ENCODE measurements at regions of chr11 and their contacts with region 1.

Region 1: DNA sequence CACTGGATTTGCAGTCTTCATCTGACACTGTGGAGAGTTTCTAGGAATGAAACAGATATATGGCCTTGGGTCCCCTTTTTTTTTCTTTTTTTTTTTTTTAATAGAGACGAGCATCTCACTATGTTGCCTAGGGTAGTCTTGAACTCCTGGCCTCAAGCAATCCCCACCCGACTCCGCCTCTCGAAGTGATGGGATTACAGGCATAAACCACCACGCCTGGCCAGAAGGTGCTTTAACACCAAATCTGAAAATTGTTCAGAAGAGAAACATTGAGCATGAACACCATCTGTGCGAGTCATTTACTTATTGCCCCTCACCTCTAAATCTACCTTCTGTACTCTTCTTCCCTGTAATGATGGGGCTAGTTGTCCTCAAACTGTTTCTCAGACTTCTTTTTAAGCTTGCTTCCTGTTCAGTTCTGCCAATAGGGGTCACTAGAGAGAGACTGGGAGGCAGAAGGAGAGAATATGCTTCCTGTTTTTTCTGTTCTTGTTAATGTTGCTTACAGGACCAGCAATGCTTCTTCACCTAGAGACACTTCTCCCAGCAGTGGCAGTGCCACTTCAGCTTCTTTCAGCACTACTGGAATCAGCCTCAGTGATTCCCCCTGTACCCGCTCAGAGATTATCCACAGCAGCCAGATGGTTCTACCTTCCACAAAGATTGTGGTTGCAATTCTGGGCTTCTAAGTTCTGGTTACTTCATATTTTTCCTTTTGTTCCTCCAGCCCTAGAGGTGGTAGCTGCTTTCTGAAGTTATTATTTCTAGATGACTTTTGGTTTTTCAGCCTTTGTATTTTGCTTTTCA is 20.8 kb upstream of the ZBED5 start:
- DNase-seq: peak; percentile 40
- ATAC-seq: no peak
- H3K4me3 Mint-ChIP-seq: no peak overlapping the region
- H3K27ac Mint-ChIP-seq: peak overlapping the region; percentile 46
- H3K4me1 Mint-ChIP-seq: peaks cover 12% of the 10 kb centered on the region
- H3K27me3 Mint-ChIP-seq: no peaks in the 10 kb centered on the region

Region 2: DNA sequence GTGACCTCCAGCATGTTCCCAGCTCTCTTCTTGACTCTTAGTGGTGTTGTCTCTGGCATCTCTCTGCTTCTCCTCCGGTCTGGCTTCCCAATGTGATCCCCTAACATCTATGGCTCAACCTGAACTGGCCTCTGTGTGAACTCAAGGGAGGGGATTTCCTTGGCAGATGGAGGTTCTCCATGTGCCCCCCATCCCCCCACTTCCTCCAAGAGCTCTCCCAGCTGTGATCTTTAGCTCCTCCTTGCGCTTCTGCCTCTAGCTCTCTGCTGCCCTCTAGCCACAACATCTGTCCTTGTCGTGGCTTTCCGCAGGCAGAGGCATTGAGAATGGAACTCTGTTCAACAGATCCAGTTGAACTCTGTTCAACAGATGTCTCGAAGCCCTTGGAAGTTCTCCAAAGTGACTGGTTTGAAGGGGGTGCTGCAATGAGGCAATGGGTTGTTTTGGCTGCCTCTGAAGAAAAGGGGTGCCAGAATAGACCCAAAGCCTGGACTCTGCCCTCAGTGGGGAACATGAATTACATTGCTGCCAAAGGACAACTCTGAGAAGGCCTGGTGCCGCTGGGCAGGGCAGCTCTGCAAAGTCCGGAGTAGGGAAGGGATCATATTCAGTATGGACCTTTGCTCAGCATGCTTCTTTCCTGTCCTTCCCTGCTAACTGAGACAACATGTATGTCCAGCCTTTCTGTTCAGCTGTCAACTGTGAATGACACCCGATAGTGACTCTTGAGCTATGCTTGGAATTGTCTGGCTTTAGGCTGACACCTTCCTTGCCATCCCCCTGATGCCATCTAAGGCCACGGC is 511.8 kb before region 1 on chr11:
- CTCF ChIA-PET with region 1: no interaction called
- POLR2A ChIA-PET with region 1: no interaction called
- DNase-seq: peak; percentile 73
- ATAC-seq: peak; percentile 68
- H3K4me3 Mint-ChIP-seq: no peak overlapping the region
- H3K27ac Mint-ChIP-seq: no peak overlapping the region
- H3K4me1 Mint-ChIP-seq: peaks cover 7% of the 10 kb centered on the region
- H3K27me3 Mint-ChIP-seq: peaks cover 14% of the 10 kb centered on the region

Region 3: GRCh38 chr11:10725114-10725906 is 153.3 kb before region 1 on chr11:
- CTCF ChIA-PET with region 1: no interaction called
- POLR2A ChIA-PET with region 1: no interaction called
- DNase-seq: no peak
- ATAC-seq: peak; percentile 68
- H3K4me3 Mint-ChIP-seq: no peak overlapping the region
- H3K27ac Mint-ChIP-seq: no peak overlapping the region
- H3K4me1 Mint-ChIP-seq: peaks cover 29% of the 10 kb centered on the region
- H3K27me3 Mint-ChIP-seq: peaks cover 15% of the 10 kb centered on the region

Region 4: GRCh38 chr11:10893714-10894151 is 15.1 kb after region 1 on chr11:
- CTCF ChIA-PET with region 1: interaction called, 14 read pairs
- POLR2A ChIA-PET with region 1: no interaction called
- DNase-seq: no peak
- ATAC-seq: no peak
- H3K4me3 Mint-ChIP-seq: no peak overlapping the region
- H3K27ac Mint-ChIP-seq: no peak overlapping the region
- H3K4me1 Mint-ChIP-seq: no peaks in the 10 kb centered on the region
- H3K27me3 Mint-ChIP-seq: peaks cover 10% of the 10 kb centered on the region